ENCODE measurements at regions of chr19 and their contacts with region 1.

Region 1: DNA sequence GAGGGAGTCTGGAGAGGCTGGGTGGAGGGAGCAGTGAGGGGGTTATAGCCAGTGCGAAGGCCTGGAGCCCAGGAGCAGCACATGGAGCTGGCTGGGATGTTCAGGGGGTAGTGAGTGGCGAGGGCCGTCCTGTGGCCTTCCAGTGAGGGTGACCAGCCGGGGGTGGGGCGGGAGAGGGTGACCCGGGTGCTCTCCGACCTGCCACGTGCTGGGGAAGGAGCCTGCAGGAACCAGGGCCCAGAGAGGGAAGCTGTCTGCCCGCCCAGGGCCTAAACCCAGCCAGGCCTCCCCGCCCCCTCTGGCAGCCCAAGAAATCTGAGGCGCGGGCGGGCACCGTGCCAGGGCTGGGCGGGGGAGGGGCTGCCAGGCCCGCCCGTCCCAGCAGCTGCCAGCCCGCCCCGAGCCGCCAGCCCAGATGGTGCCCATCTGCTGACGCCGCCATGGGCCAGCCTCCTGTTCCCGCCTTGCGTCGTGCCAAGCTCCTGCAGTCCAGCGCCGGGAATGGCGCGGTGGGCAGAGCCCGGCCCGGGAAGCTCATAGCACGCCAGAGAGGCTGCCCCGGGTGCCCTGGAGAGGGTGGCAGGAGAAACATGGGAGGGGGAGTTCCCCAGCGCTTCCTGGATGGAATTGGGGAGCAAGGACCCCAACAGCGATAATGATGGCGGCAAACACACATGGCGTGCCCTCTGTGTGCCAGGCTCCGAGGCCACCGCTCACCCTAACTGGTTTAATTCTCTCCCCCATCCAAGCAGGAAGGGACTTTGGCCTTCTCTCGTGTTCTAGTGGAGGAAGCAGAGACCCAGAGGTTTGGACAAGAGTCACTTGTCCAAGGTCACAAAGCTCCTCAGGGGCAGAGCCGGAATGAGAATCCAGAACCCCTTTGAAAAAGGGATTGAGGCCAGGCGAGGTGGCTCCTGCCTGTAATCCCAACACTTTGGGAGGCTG is 21.5 kb downstream of the NFIC start:
- DNase-seq: no peak
- ATAC-seq: peak; percentile 64
- H3K4me3 ChIP-seq: no peak overlapping the region
- H3K27ac ChIP-seq: peak overlapping the region; percentile 68
- H3K4me1 ChIP-seq: peaks cover 60% of the 10 kb centered on the region
- H3K27me3 ChIP-seq: no peaks in the 10 kb centered on the region
- CTCF ChIP-seq: no peak

Region 2: DNA sequence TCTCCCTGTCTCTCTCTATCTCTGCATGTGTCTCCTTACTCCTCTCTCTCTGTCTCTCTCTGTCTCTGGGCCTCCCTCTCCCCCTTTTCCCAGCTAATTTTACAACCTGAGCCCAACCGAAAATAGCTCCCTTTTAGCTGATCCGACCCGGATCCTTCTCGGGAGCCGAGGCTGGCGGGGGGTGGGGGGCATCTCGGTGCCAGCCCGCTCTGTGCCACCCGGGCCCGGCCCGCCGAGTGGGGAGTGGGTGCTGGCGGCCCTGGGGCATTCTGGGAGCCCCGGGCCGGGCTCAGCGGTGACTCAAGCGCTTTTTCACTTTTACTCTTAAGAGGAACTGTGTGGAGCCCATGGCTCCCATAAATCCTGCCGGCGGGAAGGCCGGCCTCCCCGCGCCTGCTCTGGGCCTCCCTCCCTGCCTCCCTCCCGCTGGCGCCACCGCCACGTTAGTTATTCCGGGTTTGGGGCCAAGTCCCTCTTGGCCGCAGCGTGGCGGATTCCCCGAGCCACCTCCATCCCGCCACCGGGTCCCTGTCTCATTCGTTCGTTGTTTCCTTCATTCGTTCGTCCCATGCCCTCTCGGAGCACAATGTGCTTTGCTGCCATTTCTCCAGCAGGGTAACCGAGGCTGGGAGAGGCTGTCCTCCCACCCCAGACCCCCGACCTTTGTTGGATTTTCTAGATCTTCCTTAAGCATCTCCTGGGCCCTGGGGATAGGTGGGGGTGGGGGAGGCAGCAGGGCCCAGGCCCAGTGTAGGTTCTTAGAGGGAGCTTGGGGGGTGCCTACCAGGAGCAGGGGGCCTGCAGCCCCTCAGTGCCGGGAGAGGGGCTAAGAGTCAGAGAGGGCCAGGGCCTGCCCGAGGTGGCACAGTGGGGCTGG is 18.3 kb before region 1 on chr19:
- CTCF ChIA-PET with region 1: no interaction called
- POLR2A ChIA-PET with region 1: interaction called, 16 read pairs
- in situ Hi-C with region 1: no loop called
- intact Hi-C with region 1: no loop called
- DNase-seq: no peak
- ATAC-seq: peak; percentile 29
- H3K4me3 ChIP-seq: peak overlapping the region; percentile 54 to 69
- H3K27ac ChIP-seq: peak overlapping the region; percentile 90
- H3K4me1 ChIP-seq: peaks cover 55% of the 10 kb centered on the region
- H3K27me3 ChIP-seq: no peaks in the 10 kb centered on the region
- CTCF ChIP-seq: no peak

Region 3: GRCh38 chr19:3526507-3527244 is 138.8 kb after region 1 on chr19:
- CTCF ChIA-PET with region 1: interaction called, 12 read pairs
- POLR2A ChIA-PET with region 1: no interaction called
- in situ Hi-C with region 1: no loop called
- intact Hi-C with region 1: no loop called
- DNase-seq: no peak
- ATAC-seq: no peak
- H3K4me3 ChIP-seq: no peak overlapping the region
- H3K27ac ChIP-seq: no peak overlapping the region
- H3K4me1 ChIP-seq: no peaks in the 10 kb centered on the region
- H3K27me3 ChIP-seq: no peaks in the 10 kb centered on the region
- CTCF ChIP-seq: no peak; the same call in 1 of the 2 replicates

Measured in Panc1 (cell line).